ENCODE measurements at regions of chr11 and their contacts with region 1.

Region 1: GRCh38 chr11:4636962-4637661 is at the start of gene OR51D1:
- DNase-seq: peak; percentile 64
- H3K4me3 ChIP-seq: peak within 1 kb of the TSS in 1 of 2 experiments; percentile 50; a peak in 1 of 4 replicates
- H3K27ac ChIP-seq: no peak within 1 kb of the TSS
- H3K4me1 ChIP-seq: no peaks in the 10 kb centered on the region; a peak in 1 of 4 replicates
- H3K27me3 ChIP-seq: peaks cover 24% of the 10 kb centered on the region
- CTCF ChIP-seq: peak; percentile 81
- EP300 ChIP-seq: no peak
- RAD21 ChIP-seq: peak; percentile 75
- polyA plus RNA-seq, gene OR51D1: not detected in 2 replicates

Region 2: DNA sequence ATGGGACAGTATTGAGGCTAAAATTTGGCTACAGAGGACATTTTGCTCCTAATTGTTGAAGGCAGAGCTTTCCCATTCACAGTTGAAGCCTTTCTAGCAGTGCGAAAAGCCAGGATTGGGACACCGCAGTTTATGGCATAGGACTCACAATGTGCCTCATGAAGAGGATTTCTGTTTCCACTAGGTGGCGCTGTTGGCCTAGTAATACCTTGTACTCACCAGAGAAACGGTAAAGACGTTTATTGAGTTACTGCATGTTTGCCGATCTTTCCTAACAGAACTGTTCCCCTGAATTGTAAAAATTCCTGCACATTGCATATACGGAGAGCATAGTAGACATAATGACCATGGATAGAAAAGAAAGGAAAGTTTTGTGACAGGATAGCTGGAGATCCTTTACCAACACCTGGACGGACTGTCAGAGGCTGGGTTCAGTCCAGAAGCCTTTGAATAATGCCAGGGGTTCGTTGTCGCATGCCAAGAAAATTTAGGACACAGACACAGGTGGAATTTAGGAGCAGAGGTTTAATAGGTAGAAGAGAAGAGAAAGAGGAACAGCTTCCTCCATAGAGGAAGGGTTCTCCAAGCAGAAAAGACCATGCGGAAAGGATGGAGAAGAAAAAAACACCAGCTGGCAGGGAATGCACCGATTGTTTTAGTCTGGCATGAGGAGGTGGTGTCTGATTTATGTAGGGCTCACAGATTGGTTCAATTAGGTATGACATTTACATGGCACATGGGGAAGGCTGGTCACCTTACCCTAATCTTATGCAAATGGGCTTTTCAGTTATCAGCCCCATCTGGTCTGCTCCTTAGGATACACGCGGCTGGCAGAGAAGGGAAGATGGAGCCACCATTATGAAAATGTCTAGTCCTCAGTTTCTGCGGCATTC is 10.7 kb before region 1 on chr11:
- CTCF ChIA-PET with region 1: interaction called, 44 read pairs
- POLR2A ChIA-PET with region 1: no interaction called
- DNase-seq: peak; percentile 31
- H3K4me3 ChIP-seq: peak overlapping the region in 1 of 2 experiments; percentile 5; a peak in 1 of 4 replicates
- H3K27ac ChIP-seq: no peak overlapping the region
- H3K4me1 ChIP-seq: no peaks in the 10 kb centered on the region
- H3K27me3 ChIP-seq: peaks cover 18% of the 10 kb centered on the region
- CTCF ChIP-seq: peak; percentile 69
- EP300 ChIP-seq: no peak
- RAD21 ChIP-seq: peak; percentile 76

Region 3: GRCh38 chr11:4647766-4648165 is 10.7 kb after region 1 on chr11:
- CTCF ChIA-PET with region 1: interaction called, 31 read pairs
- POLR2A ChIA-PET with region 1: no interaction called
- DNase-seq: peak; percentile 8
- H3K4me3 ChIP-seq: no peak overlapping the region
- H3K27ac ChIP-seq: no peak overlapping the region
- H3K4me1 ChIP-seq: peaks cover 0 to 8% of the 10 kb centered on the region in 2 experiments; a peak in 1 of 4 replicates
- H3K27me3 ChIP-seq: peaks cover 8% of the 10 kb centered on the region; the same call in 1 of the 2 replicates
- CTCF ChIP-seq: no peak
- EP300 ChIP-seq: no peak
- RAD21 ChIP-seq: no peak

Region 4: GRCh38 chr11:4903484-4903883 is 266.4 kb after region 1 on chr11 and contains the start of gene OR51A7:
- CTCF ChIA-PET with region 1: no interaction called
- POLR2A ChIA-PET with region 1: no interaction called
- DNase-seq: no peak
- H3K4me3 ChIP-seq: no peak within 1 kb of the TSS
- H3K27ac ChIP-seq: no peak within 1 kb of the TSS
- H3K4me1 ChIP-seq: no peaks in the 10 kb centered on the region
- H3K27me3 ChIP-seq: no peaks in the 10 kb centered on the region
- CTCF ChIP-seq: no peak
- EP300 ChIP-seq: no peak
- RAD21 ChIP-seq: no peak
- polyA plus RNA-seq, gene OR51A7: not detected in 2 replicates

Region 5: DNA sequence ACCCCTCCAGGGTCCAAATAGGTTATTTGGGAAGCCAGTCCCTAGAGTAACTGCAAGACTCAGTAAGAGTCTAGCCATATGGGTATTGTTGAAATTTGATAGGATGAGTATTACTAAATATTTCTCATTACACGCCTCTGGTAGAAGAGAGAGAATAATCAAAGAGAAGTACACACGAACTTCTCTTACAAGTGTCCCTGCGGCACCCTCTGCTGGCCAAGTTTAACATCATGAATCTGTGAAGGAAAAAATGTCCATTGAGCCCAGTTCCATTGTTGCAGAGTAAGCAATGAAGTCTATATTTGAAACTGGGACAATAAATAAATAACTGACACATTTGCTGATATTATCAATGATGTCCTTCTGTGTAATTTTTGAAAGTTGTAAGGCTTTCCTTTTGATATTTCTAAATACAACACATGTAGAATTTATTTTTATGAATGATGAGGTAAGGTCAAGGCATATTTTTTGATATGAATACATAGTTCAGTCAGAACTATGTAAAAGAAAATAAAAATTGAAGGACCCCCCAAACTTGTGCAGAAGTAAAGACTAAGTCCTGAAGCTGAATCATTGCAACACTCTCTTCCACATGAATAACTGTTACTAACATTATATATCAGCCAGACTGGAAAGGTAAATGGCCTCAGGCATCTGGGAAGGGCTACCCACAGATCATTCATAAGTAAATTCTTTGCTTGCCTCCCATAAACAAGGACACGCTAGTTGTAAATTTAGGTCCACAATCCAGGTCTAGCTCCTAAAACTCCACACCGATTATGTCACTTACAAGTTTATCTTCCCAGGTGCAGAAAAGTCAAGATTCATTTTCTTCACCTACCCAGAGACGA is 367.5 kb after region 1 on chr11:
- CTCF ChIA-PET with region 1: interaction called, 19 read pairs
- POLR2A ChIA-PET with region 1: no interaction called
- DNase-seq: peak; percentile 5
- H3K4me3 ChIP-seq: no peak overlapping the region
- H3K27ac ChIP-seq: no peak overlapping the region
- H3K4me1 ChIP-seq: no peaks in the 10 kb centered on the region
- H3K27me3 ChIP-seq: no peaks in the 10 kb centered on the region; the same call in 1 of the 2 replicates
- CTCF ChIP-seq: peak; percentile 71
- EP300 ChIP-seq: no peak
- RAD21 ChIP-seq: peak; percentile 71

Measured in SK-N-SH (cell line).